Activated CD4-positive, alpha-beta memory T cell treated with anti-CD3 and anti-CD28 coated beads for 36 hours (primary cell): ENCODE measurements at regions of chr5 and their contacts with region 1.

Region 1: DNA sequence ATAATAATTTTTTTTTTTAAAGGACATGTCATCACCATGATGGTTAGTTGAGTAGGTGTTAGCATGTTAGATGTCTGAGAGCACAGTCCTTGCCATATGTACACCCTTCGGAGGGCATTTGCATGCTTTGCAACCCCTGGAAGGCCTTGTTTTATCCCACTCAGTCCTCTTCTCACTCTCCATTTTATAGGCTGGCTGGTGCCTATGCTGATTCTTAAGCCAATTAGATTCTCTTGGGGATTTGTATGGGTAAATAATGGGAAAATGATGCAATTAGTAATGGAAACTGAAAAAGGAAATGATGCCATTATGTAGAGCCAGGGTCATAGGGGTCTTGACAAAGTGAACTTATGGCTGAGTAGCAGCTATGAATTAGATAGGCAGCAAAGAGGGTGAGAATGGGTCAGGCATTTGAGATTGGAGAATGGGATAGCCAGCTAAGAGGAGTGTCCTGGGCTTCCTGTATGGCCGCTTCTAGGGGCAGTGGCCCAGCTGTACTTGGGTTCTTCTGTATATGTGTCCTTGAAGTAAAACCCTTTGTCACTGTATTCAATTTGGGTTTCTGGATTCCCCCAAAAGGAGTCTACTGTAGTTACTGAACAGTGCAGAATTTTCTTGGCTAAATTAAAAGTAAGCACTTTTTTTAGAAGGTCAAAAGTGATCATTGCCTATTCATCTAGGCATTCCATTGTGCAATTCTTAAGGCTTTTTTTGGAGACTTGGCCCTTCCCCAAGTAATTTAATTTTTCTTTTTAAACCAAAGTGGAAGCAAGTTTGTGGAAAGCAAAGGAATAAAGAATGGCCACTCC is 31.6 kb downstream of the LRRTM2 start:
- DNase-seq: no peak
- H3K4me3 Mint-ChIP-seq: no peak overlapping the region
- H3K27ac Mint-ChIP-seq: no peak overlapping the region
- H3K4me1 Mint-ChIP-seq: peaks cover 5% of the 10 kb centered on the region
- H3K27me3 Mint-ChIP-seq: no peaks in the 10 kb centered on the region

Region 2: DNA sequence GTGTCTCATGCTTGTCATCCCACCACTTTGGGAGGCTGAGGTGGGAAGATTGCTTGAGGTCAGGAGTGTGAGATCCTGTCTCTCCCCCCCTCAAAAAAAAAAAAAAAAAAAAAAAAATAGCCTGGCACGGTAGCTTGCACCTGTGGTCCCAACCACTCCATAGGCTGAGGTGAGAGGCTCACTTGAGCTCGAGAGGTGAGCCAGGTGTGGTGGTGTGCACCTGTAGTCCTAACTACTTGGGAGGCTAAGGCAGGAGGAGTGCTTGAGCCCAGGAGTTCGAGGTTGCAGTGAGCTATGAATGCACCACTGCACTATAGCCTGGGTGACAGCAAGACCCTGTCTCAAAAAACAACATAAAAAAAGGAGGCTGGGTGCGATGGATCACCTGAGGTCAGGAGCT is 290.8 kb before region 1 on chr5:
- CTCF ChIA-PET with region 1: no interaction called
- POLR2A ChIA-PET with region 1: no interaction called
- intact Hi-C with region 1: no loop called
- DNase-seq: no peak
- H3K4me3 Mint-ChIP-seq: no peak overlapping the region
- H3K27ac Mint-ChIP-seq: no peak overlapping the region
- H3K4me1 Mint-ChIP-seq: peaks cover 15% of the 10 kb centered on the region
- H3K27me3 Mint-ChIP-seq: no peaks in the 10 kb centered on the region

Region 3: DNA sequence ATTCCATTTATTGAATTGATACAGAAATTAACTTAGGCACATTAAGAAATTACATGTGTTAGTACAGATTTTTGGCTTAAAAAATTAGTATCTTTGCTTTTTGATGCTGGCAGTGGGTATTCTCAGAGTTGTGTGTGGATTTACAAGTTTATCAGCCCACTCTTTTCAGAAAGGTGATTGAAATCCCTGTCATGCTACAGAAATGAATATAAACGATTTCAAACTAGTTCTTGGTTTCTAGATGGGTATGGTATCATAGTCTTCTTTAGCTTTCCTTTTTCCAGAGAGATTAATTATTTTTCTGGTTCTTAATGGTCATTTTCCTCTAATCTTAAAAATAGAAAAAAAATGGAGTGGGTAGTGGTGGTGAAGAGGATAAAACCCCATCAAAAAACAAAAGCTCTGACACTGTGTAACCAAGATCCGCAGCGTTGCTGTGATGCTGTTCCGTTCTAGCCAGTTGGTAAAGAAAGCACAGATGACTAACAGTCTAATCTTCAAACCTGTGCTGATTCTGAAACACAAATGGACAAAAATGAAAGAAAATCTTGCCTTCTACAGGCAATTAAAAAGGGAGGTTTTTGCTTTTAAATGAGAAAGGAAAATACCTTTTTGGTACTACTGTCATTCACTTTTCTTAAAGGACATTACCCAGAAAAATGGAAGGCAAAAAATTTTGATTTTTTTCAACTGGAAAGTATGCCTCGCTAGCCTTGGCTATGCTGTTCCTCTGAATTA is 26.4 kb after region 1 on chr5:
- CTCF ChIA-PET with region 1: no interaction called
- POLR2A ChIA-PET with region 1: no interaction called
- intact Hi-C with region 1: loop called (anchors 1 kb)
- DNase-seq: peak; percentile 32
- H3K4me3 Mint-ChIP-seq: peak overlapping the region; percentile 24
- H3K27ac Mint-ChIP-seq: peak overlapping the region; percentile 79
- H3K4me1 Mint-ChIP-seq: peaks cover 20% of the 10 kb centered on the region
- H3K27me3 Mint-ChIP-seq: peaks cover 17% of the 10 kb centered on the region